ENCODE measurements at regions of chr2 and their contacts with region 1.

Region 1: GRCh38 chr2:238263204-238264071 is 23.6 kb upstream of the HES6 start:
- DNase-seq: peak; percentile 98
- ATAC-seq: peak; percentile 93
- H3K4me3 ChIP-seq: peak overlapping the region in 1 of 3 experiments; percentile 44; a peak in 2 of 6 replicates
- H3K27ac ChIP-seq: peak overlapping the region; percentile 88
- H3K4me1 ChIP-seq: peaks cover 50% of the 10 kb centered on the region
- H3K27me3 ChIP-seq: no peaks in the 10 kb centered on the region
- CTCF ChIP-seq: peak; percentile 93
- EP300 ChIP-seq: peak; percentile 68 to 70; a peak in 2 of 4 replicates
- POLR2A ChIP-seq: peak in 1 of 2 experiments; percentile 76; a peak in 2 of 4 replicates
- RAD21 ChIP-seq: peak; percentile 99

Region 2: GRCh38 chr2:237858294-237859081 is 404.9 kb before region 1 on chr2:
- CTCF ChIA-PET with region 1: interaction called, 3 read pairs
- POLR2A ChIA-PET with region 1: interaction called, 4 read pairs
- in situ Hi-C with region 1: loop called (anchors 10 kb)
- intact Hi-C with region 1: loop called (anchors 1 kb)
- DNase-seq: peak; percentile 78
- ATAC-seq: peak; percentile 92
- H3K4me3 ChIP-seq: peak overlapping the region in 1 of 3 experiments; percentile 61; a peak in 1 of 6 replicates
- H3K27ac ChIP-seq: no peak overlapping the region
- H3K4me1 ChIP-seq: peaks cover 29% of the 10 kb centered on the region
- H3K27me3 ChIP-seq: peaks cover 8 to 84% of the 10 kb centered on the region in 2 experiments; a peak in 4 of 5 replicates
- CTCF ChIP-seq: peak; percentile 97
- EP300 ChIP-seq: no peak
- POLR2A ChIP-seq: no peak
- RAD21 ChIP-seq: peak; percentile 96

Region 3: GRCh38 chr2:238203094-238203972 is 60.1 kb before region 1 on chr2 and contains the start of gene ILKAP:
- CTCF ChIA-PET with region 1: no interaction called
- POLR2A ChIA-PET with region 1: no interaction called
- in situ Hi-C with region 1: no loop called
- intact Hi-C with region 1: loop called (anchors 1 kb)
- DNase-seq: peak; percentile 75
- ATAC-seq: peak; percentile 99
- H3K4me3 ChIP-seq: peak within 1 kb of the TSS; percentile 72 to 89 (median 81)
- H3K27ac ChIP-seq: peak within 1 kb of the TSS; percentile 59
- H3K4me1 ChIP-seq: peaks cover 44% of the 10 kb centered on the region
- H3K27me3 ChIP-seq: peaks cover 0 to 25% of the 10 kb centered on the region in 2 experiments; a peak in 2 of 5 replicates
- CTCF ChIP-seq: no peak
- EP300 ChIP-seq: no peak
- POLR2A ChIP-seq: peak; percentile 65 to 85
- RAD21 ChIP-seq: peak; percentile 43
- total RNA-seq, gene ILKAP: 28.8 and 33.1 TPM in 2 replicates

Region 4: GRCh38 chr2:238239872-238240751 is 23.3 kb before region 1 on chr2 and contains the start of gene HES6:
- CTCF ChIA-PET with region 1: interaction called, 3 read pairs
- POLR2A ChIA-PET with region 1: interaction called, 12 read pairs
- in situ Hi-C with region 1: no loop called
- intact Hi-C with region 1: no loop called
- DNase-seq: peak; percentile 82
- ATAC-seq: peak; percentile 83
- H3K4me3 ChIP-seq: peak within 1 kb of the TSS; percentile 61 to 85 (median 74)
- H3K27ac ChIP-seq: peak within 1 kb of the TSS; percentile 54
- H3K4me1 ChIP-seq: peaks cover 57% of the 10 kb centered on the region
- H3K27me3 ChIP-seq: no peaks in the 10 kb centered on the region; a peak in 2 of 5 replicates
- CTCF ChIP-seq: no peak; the same call in 1 of the 2 replicates
- EP300 ChIP-seq: 0 out of 4 replicates have a peak, but pooled peaks of 1 of the 2 experiments have one; percentile 13
- POLR2A ChIP-seq: peak in 1 of 2 experiments; percentile 95; a peak in 2 of 4 replicates
- RAD21 ChIP-seq: peak; percentile 82
- total RNA-seq, gene HES6: 59.0 and 82.8 TPM in 2 replicates

Region 5: DNA sequence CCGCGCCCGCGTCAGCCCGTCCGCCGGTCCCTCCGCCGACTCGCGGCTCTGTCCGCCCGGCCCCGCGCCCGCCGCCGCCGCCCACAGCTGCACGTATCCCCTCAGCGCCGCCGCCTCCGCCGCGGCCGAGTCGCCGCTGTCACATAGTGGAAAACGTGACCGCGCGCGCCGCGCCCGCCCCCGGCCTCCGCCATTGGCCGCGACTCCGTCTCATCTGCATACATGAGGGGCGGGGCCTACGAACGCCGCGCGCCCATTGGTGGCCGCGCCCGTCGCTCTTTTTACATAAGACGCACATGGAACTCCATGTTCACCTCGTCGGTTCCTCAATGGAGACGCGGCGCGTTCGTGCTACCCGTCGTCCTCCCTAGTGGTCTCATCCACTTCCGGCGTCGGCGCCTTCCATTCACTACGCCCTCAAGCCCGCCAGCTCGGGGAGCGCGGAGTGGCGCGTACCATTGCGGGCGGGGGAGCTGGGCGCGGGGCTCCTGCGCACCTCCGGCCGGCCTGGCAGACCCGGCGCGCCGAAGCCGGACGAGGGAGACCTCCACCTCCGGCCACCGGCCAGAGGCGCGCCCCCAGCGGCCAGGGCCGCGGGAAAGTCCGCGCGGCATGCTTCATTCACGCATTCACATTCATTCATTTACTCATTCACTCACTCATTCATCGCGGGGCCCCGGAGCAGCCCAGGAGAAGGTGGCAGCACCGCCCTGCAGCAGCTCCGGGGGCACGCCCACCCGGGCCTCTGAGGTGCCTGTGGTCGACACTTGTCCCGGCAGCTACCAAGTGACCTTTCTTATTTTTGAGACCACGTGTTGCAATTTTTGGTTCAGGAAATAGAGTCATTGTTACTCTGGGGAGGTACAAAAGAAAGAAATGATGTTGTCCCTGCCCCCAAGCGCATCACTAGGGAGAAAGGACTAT is 25.5 kb after region 1 on chr2:
- CTCF ChIA-PET with region 1: interaction called, 4 read pairs
- POLR2A ChIA-PET with region 1: interaction called, 44 read pairs
- in situ Hi-C with region 1: no loop called
- intact Hi-C with region 1: loop called (anchors 1 kb)
- DNase-seq: peak; percentile 99
- ATAC-seq: peak; percentile 77
- H3K4me3 ChIP-seq: peak overlapping the region; percentile 75 to 99 (median 87)
- H3K27ac ChIP-seq: peak overlapping the region; percentile 99
- H3K4me1 ChIP-seq: peaks cover 63% of the 10 kb centered on the region
- H3K27me3 ChIP-seq: no peaks in the 10 kb centered on the region; a peak in 1 of 5 replicates
- CTCF ChIP-seq: peak; percentile 46
- EP300 ChIP-seq: no peak
- POLR2A ChIP-seq: peak in 1 of 2 experiments; percentile 83; a peak in 2 of 4 replicates
- RAD21 ChIP-seq: peak; percentile 79

Region 6: GRCh38 chr2:238305092-238305862 is 41.8 kb after region 1 on chr2:
- CTCF ChIA-PET with region 1: interaction called, 3 read pairs
- POLR2A ChIA-PET with region 1: interaction called, 6 read pairs
- in situ Hi-C with region 1: no loop called
- intact Hi-C with region 1: loop called (anchors 1 kb)
- DNase-seq: peak; percentile 51
- ATAC-seq: peak; percentile 83
- H3K4me3 ChIP-seq: peak overlapping the region in 1 of 3 experiments; percentile 22; a peak in 1 of 6 replicates
- H3K27ac ChIP-seq: no peak overlapping the region
- H3K4me1 ChIP-seq: peaks cover 33% of the 10 kb centered on the region
- H3K27me3 ChIP-seq: peaks cover 1 to 8% of the 10 kb centered on the region in 2 experiments; a peak in 3 of 5 replicates
- CTCF ChIP-seq: peak; percentile 64
- EP300 ChIP-seq: no peak
- POLR2A ChIP-seq: no peak
- RAD21 ChIP-seq: peak; percentile 53